HEK293 (cell line): ENCODE measurements at regions of chr5 and their contacts with region 1.

Region 1: DNA sequence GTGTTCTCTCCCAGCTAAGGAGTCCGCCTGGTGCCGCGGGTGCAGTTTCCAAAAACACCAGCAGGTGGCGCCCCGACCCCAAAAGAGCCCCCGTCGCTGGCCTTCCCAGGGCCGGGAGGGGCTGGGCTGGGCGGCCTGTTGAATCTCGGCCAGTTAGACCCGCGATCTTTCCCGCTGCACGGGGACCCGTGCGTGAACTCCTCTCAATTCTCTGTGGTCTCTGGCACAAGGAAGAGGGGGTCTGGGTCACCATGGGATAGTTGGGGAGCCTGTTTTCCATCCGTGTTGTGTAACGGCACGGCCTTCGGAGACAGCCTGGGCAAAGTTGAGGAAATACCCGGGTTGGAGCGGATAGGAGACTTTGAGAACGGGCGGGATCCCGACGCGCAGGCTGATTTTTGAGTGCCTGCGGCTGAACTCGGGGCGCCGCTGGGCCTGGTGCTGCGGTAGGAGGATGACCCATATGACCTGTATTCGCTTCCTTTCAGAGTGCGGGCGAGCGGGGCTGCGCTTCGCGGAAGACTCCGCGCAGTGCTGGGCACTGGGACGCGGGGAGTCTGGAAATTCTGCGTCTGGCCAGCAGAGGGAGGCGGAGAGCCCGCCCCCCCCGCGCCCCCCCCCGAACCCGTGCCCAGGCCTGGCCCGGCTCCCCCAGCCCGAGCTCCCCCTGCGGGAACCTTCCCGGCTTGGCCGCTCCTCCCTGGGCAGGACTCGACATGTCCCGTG is 7.9 kb upstream of the PSD2 start:
- H3K4me3 ChIP-seq: peak overlapping the region; percentile 48
- H3K27ac ChIP-seq: peak overlapping the region; percentile 56; the same call in 1 of the 2 replicates
- H3K4me1 ChIP-seq: no peaks in the 10 kb centered on the region
- CTCF ChIP-seq: peak; percentile 79; the same call in 1 of the 2 replicates

Region 2: DNA sequence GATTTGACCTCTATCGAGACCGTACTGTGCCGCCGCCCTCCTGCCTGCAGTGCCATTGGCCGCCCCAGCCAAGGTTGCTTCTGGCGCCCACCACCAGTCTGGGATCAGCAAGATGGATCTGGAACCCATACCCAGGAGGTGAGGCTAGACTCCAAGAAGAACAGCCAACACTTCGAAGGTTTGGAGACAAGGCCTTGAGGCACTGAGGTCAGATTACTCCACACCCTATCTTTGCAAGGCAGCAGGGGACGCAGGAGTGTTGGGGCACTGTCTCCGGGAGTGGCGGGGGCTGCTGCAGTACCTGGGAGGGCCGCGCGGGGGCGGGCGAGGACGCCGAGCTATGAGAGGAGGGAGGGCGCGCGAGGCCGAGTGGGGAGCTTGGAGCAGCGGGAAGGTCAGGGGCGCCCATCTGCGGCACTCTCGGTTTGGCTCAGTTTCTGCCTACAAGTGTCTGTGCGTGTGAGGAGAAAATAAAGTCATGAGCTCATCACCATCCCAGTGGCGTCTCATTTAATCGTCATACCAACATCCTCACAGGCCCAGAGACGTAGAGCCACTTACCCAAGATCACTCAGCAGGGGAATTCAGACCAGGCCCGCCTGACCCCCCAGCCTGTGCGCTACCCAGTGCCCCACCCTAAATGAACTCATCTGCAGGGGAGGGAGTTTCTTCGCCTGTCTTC is 12.6 kb before region 1 on chr5:
- CTCF ChIA-PET with region 1: interaction called, 46 read pairs
- POLR2A ChIA-PET with region 1: interaction called, 5 read pairs
- H3K4me3 ChIP-seq: no peak overlapping the region
- H3K27ac ChIP-seq: no peak overlapping the region
- H3K4me1 ChIP-seq: no peaks in the 10 kb centered on the region
- CTCF ChIP-seq: peak; percentile 84

Region 3: DNA sequence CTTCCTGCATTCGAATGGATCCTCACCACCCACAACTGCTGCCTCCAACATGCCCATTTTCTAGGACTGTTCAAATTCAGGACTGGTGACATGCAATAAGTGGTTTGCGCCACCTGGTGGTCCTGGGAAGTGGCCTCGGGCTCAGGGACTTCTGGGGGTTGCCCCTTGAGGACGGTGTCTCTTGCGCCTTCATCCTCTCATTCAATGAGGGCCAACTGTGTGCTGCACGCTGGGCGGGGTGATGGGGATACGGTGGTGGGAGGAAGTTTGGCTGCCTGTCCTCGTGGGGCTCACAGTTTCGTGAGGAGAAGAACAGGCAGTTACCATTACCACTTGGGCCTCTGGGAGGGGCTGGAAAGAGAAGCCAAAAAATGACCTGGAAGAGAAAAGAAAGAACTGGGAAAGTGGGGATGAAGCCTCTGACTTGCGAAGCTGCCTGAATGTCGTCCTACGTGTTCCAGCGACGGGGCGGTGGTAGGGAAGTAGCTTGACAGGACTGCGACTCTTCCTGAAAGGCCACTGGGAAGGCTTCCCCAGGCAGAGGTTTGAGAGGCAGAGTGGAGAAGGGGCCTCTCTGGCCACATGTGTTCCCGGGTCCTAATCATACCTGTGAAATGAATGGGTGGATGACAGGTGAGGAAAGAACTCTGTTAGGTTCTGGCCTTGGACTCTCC is 56.9 kb after region 1 on chr5:
- CTCF ChIA-PET with region 1: interaction called, 71 read pairs
- POLR2A ChIA-PET with region 1: no interaction called
- H3K4me3 ChIP-seq: no peak overlapping the region
- H3K27ac ChIP-seq: no peak overlapping the region
- H3K4me1 ChIP-seq: no peaks in the 10 kb centered on the region
- CTCF ChIP-seq: peak; percentile 88